Activated naive CD8-positive, alpha-beta T cell treated with anti-CD3 and anti-CD28 coated beads, Interleukin-2, amount 10 ng/mL, durations not matched to agents 7 days and 5 days (primary cell): ENCODE measurements at regions of chr16 and their contacts with region 1.

Region 1: DNA sequence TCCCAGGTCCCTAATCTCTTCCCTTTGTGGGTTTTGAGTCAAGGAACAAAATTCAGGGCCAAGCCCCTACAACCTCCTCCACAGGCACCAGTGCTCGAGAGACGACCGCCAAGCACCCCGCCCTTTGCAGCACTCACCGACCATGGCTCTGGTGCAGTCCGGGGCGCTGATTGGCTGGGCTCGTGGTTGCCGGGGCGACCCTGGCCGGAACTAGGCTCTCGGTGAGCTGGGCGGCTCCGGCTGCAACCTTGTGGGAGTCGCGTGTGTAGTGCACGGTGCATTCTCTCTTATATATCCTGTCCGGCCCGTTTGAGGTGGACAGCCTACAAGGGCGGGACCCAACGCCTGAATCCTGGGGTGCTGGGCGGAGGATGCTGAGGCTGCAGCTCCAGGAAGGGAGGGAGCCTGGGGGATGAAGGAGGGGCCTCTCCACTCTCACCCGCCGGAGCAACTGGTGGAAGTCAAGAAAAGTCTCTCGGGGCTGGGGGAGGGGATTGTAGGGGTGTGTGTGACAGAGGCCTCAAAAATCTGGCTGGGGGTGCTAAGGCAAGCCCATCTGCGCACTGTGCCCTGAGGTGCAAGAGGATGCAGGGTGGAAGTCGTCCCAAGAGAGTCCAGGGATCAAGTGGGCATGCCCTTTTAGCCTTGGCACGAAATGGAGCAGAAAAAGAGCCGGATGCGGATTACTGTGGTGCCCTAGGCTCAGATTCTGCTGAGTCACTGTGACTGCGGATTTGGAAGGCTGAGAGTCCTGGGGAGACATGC is at the start of gene NQO1:
- DNase-seq: peak; percentile 91
- ATAC-seq: peak; percentile 99
- H3K4me3 Mint-ChIP-seq: peak within 1 kb of the TSS; percentile 96
- H3K27ac Mint-ChIP-seq: peak within 1 kb of the TSS; percentile 92
- H3K4me1 Mint-ChIP-seq: peaks cover 29% of the 10 kb centered on the region
- H3K27me3 Mint-ChIP-seq: no peaks in the 10 kb centered on the region
- total RNA-seq, gene NQO1: 12.1 to 14.5 TPM

Region 2: GRCh38 chr16:69680358-69680757 is 46.1 kb before region 1 on chr16:
- POLR2A ChIA-PET with region 1: no interaction called
- DNase-seq: no peak
- ATAC-seq: no peak
- H3K4me3 Mint-ChIP-seq: no peak overlapping the region
- H3K27ac Mint-ChIP-seq: no peak overlapping the region
- H3K4me1 Mint-ChIP-seq: no peaks in the 10 kb centered on the region
- H3K27me3 Mint-ChIP-seq: no peaks in the 10 kb centered on the region

Region 3: DNA sequence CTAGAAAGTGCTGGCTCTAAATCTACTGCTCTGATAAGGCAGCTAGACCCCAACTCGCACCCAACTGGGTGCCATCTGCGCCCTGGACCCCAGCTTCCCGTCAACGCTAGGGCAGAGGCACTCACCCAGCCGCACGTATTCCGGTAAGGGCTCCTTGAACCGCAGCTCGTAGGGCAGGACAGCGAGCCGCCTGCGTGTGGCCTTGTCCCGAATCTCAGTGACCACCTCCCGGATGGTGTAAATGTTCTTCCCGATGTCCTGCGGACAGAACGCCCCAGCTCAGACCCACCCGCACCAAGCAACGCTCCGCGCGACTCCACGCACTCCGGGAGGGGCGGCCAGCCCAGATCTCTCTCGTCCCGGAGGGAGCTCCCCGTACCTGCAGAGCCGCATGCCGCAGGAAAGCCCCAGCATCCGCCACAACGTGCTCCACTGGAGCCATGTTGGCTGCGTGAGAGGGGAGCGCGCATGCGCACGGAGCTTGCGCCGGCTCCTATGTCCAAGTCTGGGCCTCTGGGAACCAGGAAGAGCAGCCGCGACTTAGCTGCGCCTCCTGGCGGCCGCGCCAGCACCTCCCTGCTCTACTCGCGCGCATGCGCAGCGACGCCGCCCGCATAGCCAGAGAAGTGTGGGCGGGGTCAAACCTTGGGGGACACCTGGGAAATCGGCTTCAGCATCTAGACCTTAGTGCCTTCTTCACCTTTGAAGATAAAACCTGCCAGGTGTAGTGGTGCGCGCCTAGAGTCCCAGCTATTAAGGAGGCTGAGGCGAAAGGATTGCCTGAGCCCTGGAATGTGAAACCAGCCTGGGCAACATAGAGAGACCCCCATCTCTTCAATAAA is 28.2 kb after region 1 on chr16 and contains the start of gene NOB1:
- POLR2A ChIA-PET with region 1: interaction called, 50 read pairs
- DNase-seq: peak; percentile 99
- ATAC-seq: peak; percentile 98
- H3K4me3 Mint-ChIP-seq: peak within 1 kb of the TSS; percentile 99
- H3K27ac Mint-ChIP-seq: peak within 1 kb of the TSS; percentile 97
- H3K4me1 Mint-ChIP-seq: peaks cover 21% of the 10 kb centered on the region
- H3K27me3 Mint-ChIP-seq: no peaks in the 10 kb centered on the region
- total RNA-seq, gene NOB1: 54.5 to 59.0 TPM

Region 4: GRCh38 chr16:69761983-69762813 is 35.7 kb after region 1 on chr16 and contains the start of gene WWP2:
- POLR2A ChIA-PET with region 1: interaction called, 20 read pairs
- DNase-seq: peak; percentile 83
- ATAC-seq: peak; percentile 82
- H3K4me3 Mint-ChIP-seq: peak within 1 kb of the TSS; percentile 96
- H3K27ac Mint-ChIP-seq: peak within 1 kb of the TSS; percentile 96
- H3K4me1 Mint-ChIP-seq: peaks cover 18% of the 10 kb centered on the region
- H3K27me3 Mint-ChIP-seq: no peaks in the 10 kb centered on the region
- total RNA-seq, gene WWP2: 60.6 to 61.5 TPM